CD4-positive, alpha-beta memory T cell (primary cell): ENCODE measurements at regions of chr3 and their contacts with region 1.

Region 1: DNA sequence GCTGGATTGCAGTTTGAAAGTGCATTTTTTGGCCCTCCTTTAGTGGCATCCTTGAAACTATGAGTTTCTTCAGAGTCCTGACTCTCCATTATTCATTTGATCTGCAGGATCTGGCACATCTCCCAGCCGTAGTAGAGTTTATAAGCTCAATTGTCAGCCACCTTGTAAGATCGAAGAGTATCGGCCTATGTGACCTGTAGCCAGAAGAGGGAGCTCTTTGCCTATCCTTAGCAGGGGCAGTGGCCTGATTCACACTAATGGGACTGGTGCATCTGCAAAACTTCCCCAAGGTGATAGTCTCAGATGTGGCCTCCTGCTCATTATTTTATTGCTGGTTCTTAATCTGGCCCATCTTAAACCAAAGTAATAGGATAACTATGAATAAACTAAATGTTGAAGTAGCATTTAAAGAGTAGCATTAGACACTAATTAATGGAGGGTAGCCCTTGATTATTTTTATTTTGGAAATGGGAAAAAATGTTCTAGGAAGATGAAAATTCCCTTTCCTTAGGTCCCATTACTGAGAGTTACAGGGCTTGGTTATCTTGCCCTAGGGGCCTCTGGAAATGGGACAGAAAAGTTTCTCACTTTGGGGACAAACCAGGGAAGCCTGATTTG is 21.2 kb downstream of the GCSAM start:
- DNase-seq: peak; percentile 70 to 76 (median 73)
- H3K4me3 ChIP-seq: no peak overlapping the region
- H3K4me3 Mint-ChIP-seq: no peak overlapping the region
- H3K27ac ChIP-seq: no peak overlapping the region
- H3K27ac Mint-ChIP-seq: peak overlapping the region in 5 of 7 donors; percentile 10 to 75 (median 59)
- H3K4me1 ChIP-seq: no peaks in the 10 kb centered on the region
- H3K4me1 Mint-ChIP-seq: peaks cover 8 to 10% (median 8%) of the 10 kb centered on the region in 4 donors
- H3K27me3 ChIP-seq: no peaks in the 10 kb centered on the region
- H3K27me3 Mint-ChIP-seq: no peaks in the 10 kb centered on the region

Region 2: DNA sequence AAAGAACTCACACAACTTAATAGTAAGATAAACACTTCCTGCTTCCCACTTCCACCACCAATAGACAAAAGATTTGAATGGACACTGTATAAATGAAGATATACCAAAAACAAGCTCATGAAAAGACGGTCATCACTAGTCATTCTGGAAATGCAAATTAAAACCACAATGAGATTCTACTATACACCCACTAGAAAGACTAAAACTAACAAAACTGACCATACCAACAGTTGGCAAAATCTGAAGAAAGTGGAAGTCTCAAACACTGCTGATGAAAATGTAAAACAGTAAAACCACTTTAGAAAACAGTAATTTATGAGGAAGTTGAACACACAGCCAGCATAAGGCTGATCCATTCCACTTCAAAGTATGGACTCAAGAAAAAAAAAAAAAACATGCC is 605.5 kb before region 1 on chr3:
- CTCF ChIA-PET with region 1: no interaction called
- POLR2A ChIA-PET with region 1: no interaction called
- intact Hi-C with region 1: no loop called
- DNase-seq: no peak
- H3K4me3 ChIP-seq: no peak overlapping the region
- H3K4me3 Mint-ChIP-seq: no peak overlapping the region
- H3K27ac ChIP-seq: no peak overlapping the region
- H3K27ac Mint-ChIP-seq: no peak overlapping the region
- H3K4me1 ChIP-seq: no peaks in the 10 kb centered on the region
- H3K4me1 Mint-ChIP-seq: peaks cover 0 to 3% (median under 1%) of the 10 kb centered on the region in 4 donors
- H3K27me3 ChIP-seq: no peaks in the 10 kb centered on the region
- H3K27me3 Mint-ChIP-seq: no peaks in the 10 kb centered on the region

Region 3: DNA sequence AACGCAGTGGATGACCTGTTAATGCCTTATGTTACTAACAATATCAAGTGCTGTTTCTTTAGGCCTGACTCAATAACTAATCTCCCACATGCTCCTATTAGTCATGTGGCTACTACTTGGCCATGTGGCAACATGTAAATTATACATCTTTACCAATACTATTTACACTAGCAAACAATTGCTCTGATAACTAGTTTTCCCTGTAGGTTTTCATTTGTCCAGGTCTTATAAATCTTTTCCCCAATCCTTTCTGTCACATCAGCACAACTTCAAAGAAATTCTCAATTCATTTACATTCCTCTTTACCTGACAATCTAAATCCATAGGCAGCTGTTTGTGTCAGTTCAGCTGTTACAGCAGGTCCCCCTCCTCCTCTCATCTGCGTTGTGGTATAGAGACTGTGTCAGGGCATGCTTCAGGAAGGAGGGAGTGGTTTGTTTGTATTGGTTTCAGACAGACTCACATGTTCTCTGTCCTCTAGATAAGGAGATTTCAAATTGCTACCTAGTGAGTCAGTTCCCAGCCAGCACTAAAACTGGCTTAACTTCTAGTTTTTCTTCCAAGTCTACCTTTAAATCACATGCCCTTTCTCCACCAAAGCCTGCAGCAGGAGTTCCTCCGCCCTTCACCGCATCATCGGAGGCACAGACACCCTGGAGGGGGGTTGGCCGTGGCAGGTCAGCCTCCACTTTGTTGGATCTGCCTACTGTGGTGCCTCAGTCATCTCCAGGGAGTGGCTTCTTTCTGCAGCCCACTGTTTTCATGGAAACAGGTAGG is 37.0 kb before region 1 on chr3:
- CTCF ChIA-PET with region 1: interaction called, 3 read pairs
- POLR2A ChIA-PET with region 1: interaction called, 5 read pairs
- intact Hi-C with region 1: loop called (anchors 1 kb)
- DNase-seq: peak; percentile 38 to 68 (median 61)
- H3K4me3 ChIP-seq: no peak overlapping the region
- H3K4me3 Mint-ChIP-seq: peak overlapping the region; percentile 37 to 82 (median 72)
- H3K27ac ChIP-seq: peak overlapping the region; percentile 21
- H3K27ac Mint-ChIP-seq: peak overlapping the region; percentile 65 to 93 (median 83)
- H3K4me1 ChIP-seq: peaks cover 35% of the 10 kb centered on the region
- H3K4me1 Mint-ChIP-seq: peaks cover 28 to 60% (median 40%) of the 10 kb centered on the region in 4 donors
- H3K27me3 ChIP-seq: no peaks in the 10 kb centered on the region
- H3K27me3 Mint-ChIP-seq: no peaks in the 10 kb centered on the region

Region 4: DNA sequence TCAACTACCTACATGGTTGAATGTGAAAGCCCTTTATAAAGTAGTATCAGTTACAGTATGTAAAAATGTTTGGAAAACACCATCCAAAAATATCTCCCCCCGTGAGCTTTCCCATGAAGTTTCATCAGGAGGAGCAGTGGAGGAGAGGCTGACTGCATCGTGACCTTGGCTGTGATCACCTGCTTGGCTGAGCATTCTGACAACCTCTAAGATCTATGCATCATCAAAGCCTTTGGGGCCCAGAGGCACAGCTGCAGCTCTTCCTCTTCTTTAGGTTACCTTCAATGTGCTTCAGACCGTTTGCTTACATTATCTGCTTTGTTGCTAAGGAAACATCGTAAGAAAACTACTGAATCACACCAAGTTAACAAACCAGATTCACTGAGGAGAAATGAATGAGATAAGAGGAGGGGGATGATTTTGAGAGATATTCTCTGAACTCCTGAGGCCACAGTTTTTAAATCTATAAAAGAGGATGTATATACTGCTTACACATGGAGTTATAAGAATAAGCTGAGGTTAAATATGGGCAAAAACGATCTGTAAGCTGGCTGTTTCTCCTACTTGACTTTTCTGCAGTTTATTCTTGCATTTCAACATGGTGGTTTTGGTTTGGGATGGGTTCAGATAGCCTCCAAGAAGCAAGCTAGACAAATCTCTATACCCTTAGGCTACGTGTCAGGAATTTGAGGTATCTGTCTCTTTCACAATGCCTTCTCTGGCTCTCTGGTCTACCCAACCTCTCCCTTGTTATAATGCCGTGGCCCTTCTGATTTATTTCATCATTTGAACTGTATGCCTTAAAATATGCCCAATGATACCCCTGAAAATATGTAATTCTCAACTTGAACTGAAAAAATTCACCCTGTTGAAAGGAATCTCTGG is 17.2 kb after region 1 on chr3:
- CTCF ChIA-PET with region 1: interaction called, 43 read pairs
- POLR2A ChIA-PET with region 1: interaction called, 4 read pairs
- intact Hi-C with region 1: loop called (anchors 1 kb)
- DNase-seq: peak; percentile 78 to 86 (median 82)
- H3K4me3 ChIP-seq: no peak overlapping the region
- H3K4me3 Mint-ChIP-seq: peak overlapping the region in 7 of 8 donors; percentile 38 to 74 (median 59)
- H3K27ac ChIP-seq: peak overlapping the region; percentile 67
- H3K27ac Mint-ChIP-seq: peak overlapping the region; percentile 78 to 97 (median 95)
- H3K4me1 ChIP-seq: peaks cover 93% of the 10 kb centered on the region
- H3K4me1 Mint-ChIP-seq: peaks cover 70 to 93% (median 82%) of the 10 kb centered on the region in 4 donors
- H3K27me3 ChIP-seq: no peaks in the 10 kb centered on the region
- H3K27me3 Mint-ChIP-seq: no peaks in the 10 kb centered on the region

Region 5: GRCh38 chr3:112167758-112168157 is 55.9 kb after region 1 on chr3:
- CTCF ChIA-PET with region 1: no interaction called
- POLR2A ChIA-PET with region 1: no interaction called
- intact Hi-C with region 1: loop called (anchors 5 kb)
- DNase-seq: no peak
- H3K4me3 ChIP-seq: no peak overlapping the region
- H3K4me3 Mint-ChIP-seq: no peak overlapping the region
- H3K27ac ChIP-seq: no peak overlapping the region
- H3K27ac Mint-ChIP-seq: no peak overlapping the region
- H3K4me1 ChIP-seq: no peaks in the 10 kb centered on the region
- H3K4me1 Mint-ChIP-seq: no peaks in the 10 kb centered on the region
- H3K27me3 ChIP-seq: no peaks in the 10 kb centered on the region
- H3K27me3 Mint-ChIP-seq: peaks cover 0 to 7% of the 10 kb centered on the region in 2 donors

Region 6: GRCh38 chr3:112327371-112327951 is 215.6 kb after region 1 on chr3:
- CTCF ChIA-PET with region 1: interaction called, 7 read pairs
- POLR2A ChIA-PET with region 1: no interaction called
- intact Hi-C with region 1: loop called (anchors 1 kb)
- DNase-seq: peak; percentile 56 to 66 (median 60)
- H3K4me3 ChIP-seq: no peak overlapping the region
- H3K4me3 Mint-ChIP-seq: no peak overlapping the region
- H3K27ac ChIP-seq: no peak overlapping the region
- H3K27ac Mint-ChIP-seq: no peak overlapping the region
- H3K4me1 ChIP-seq: no peaks in the 10 kb centered on the region
- H3K4me1 Mint-ChIP-seq: peaks cover 0 to 7% (median under 1%) of the 10 kb centered on the region in 4 donors
- H3K27me3 ChIP-seq: no peaks in the 10 kb centered on the region
- H3K27me3 Mint-ChIP-seq: peaks cover 4 to 6% of the 10 kb centered on the region in 2 donors

Region 7: GRCh38 chr3:112498914-112499711 is 387.2 kb after region 1 on chr3 and contains the start of gene BTLA:
- CTCF ChIA-PET with region 1: interaction called, 11 read pairs
- POLR2A ChIA-PET with region 1: no interaction called
- intact Hi-C with region 1: no loop called
- DNase-seq: peak; percentile 39 to 48 (median 42)
- H3K4me3 ChIP-seq: peak within 1 kb of the TSS; percentile 65 to 66
- H3K4me3 Mint-ChIP-seq: peak within 1 kb of the TSS; percentile 94 to 100 (median 97)
- H3K27ac ChIP-seq: peak within 1 kb of the TSS; percentile 57
- H3K27ac Mint-ChIP-seq: peak within 1 kb of the TSS; percentile 91 to 97 (median 95)
- H3K4me1 ChIP-seq: peaks cover 44% of the 10 kb centered on the region
- H3K4me1 Mint-ChIP-seq: peaks cover 31 to 63% (median 38%) of the 10 kb centered on the region in 4 donors
- H3K27me3 ChIP-seq: no peaks in the 10 kb centered on the region
- H3K27me3 Mint-ChIP-seq: no peaks in the 10 kb centered on the region
- total RNA-seq, gene BTLA: 22.9 to 24.9 TPM

Region 8: DNA sequence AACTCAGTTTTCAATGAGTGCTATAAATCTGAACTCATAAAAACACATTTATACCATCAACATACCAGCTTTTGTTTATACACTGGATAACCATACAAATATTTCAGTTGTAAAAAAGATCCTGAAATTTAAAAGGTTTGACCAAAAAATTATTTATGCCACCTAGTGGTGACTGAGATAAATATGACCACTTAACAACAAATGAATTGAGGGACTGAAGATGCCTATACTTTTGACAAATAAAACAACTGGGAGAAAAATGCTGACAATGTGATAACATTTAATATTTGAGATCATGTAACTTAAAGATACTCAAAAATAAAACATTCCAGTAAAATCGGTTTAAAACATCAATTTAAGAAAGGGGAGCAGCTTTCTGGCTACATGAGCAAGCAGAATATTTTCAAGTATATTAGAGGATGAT is 419.5 kb after region 1 on chr3:
- CTCF ChIA-PET with region 1: interaction called, 12 read pairs
- POLR2A ChIA-PET with region 1: no interaction called
- intact Hi-C with region 1: loop called (anchors 1 kb)
- DNase-seq: peak in 4 of 5 donors; percentile 22 to 37 (median 30)
- H3K4me3 ChIP-seq: no peak overlapping the region
- H3K4me3 Mint-ChIP-seq: no peak overlapping the region
- H3K27ac ChIP-seq: no peak overlapping the region
- H3K27ac Mint-ChIP-seq: peak overlapping the region in 2 of 7 donors; percentile 5 to 12
- H3K4me1 ChIP-seq: no peaks in the 10 kb centered on the region
- H3K4me1 Mint-ChIP-seq: peaks cover 0 to 4% (median 2%) of the 10 kb centered on the region in 4 donors
- H3K27me3 ChIP-seq: no peaks in the 10 kb centered on the region
- H3K27me3 Mint-ChIP-seq: no peaks in the 10 kb centered on the region